ENCODE measurements at regions of chr11 and their contacts with region 1.

Region 1: GRCh38 chr11:114066046-114066648 is 6.6 kb downstream of the ZBTB16 start:
- DNase-seq: no peak
- ATAC-seq: no peak
- H3K4me3 ChIP-seq: peak overlapping the region; percentile 38
- H3K27ac ChIP-seq: no peak overlapping the region
- H3K4me1 ChIP-seq: peaks cover 59% of the 10 kb centered on the region
- H3K27me3 ChIP-seq: no peaks in the 10 kb centered on the region

Region 2: GRCh38 chr11:113839842-113840241 is 226.3 kb before region 1 on chr11:
- intact Hi-C with region 1: no loop called
- DNase-seq: no peak
- ATAC-seq: no peak
- H3K4me3 ChIP-seq: no peak overlapping the region
- H3K27ac ChIP-seq: no peak overlapping the region
- H3K4me1 ChIP-seq: peaks cover 3% of the 10 kb centered on the region
- H3K27me3 ChIP-seq: no peaks in the 10 kb centered on the region

Region 3: GRCh38 chr11:114099392-114100178 is 33.4 kb after region 1 on chr11:
- intact Hi-C with region 1: loop called in 1 of 4 experiments (anchors 5 kb)
- DNase-seq: no peak
- ATAC-seq: peak in 1 of 2 donors; percentile 26
- H3K4me3 ChIP-seq: no peak overlapping the region
- H3K27ac ChIP-seq: no peak overlapping the region
- H3K4me1 ChIP-seq: peaks cover 41% of the 10 kb centered on the region
- H3K27me3 ChIP-seq: no peaks in the 10 kb centered on the region